ENCODE measurements at regions of chr2 and their contacts with region 1.

Region 1: GRCh38 chr2:225932811-225933413 is 533.4 kb downstream of the NYAP2 start:
- DNase-seq: no peak
- H3K4me3 ChIP-seq: no peak overlapping the region
- H3K4me3 Mint-ChIP-seq: no peak overlapping the region
- H3K27ac Mint-ChIP-seq: no peak overlapping the region
- H3K4me1 ChIP-seq: no peaks in the 10 kb centered on the region
- H3K4me1 Mint-ChIP-seq: no peaks in the 10 kb centered on the region
- H3K27me3 ChIP-seq: no peaks in the 10 kb centered on the region
- H3K27me3 Mint-ChIP-seq: no peaks in the 10 kb centered on the region
- CTCF ChIP-seq: no peak

Region 2: DNA sequence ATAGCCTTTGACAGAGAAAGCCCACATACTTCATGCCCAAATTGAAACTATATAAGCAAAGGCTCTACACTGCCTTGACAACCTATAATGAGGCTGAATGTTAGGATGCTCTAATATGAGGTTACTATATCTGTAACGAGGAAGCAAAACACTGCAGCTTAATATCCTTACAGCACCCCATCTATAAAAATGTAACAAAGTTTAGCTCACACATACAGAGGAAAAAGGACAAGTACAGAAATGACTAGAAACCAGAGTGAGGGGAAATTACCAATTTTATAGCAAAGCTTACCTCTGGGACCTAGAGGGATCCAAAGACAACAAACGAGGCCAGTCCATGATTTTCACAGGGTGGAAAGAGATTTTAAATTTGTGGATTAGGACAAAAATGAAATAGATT is 1092.6 kb after region 1 on chr2:
- CTCF ChIA-PET with region 1: no interaction called
- POLR2A ChIA-PET with region 1: no interaction called
- intact Hi-C with region 1: loop called (anchors 5 kb)
- DNase-seq: no peak
- H3K4me3 ChIP-seq: no peak overlapping the region
- H3K4me3 Mint-ChIP-seq: no peak overlapping the region
- H3K27ac Mint-ChIP-seq: no peak overlapping the region
- H3K4me1 ChIP-seq: no peaks in the 10 kb centered on the region
- H3K4me1 Mint-ChIP-seq: no peaks in the 10 kb centered on the region
- H3K27me3 ChIP-seq: no peaks in the 10 kb centered on the region
- H3K27me3 Mint-ChIP-seq: no peaks in the 10 kb centered on the region
- CTCF ChIP-seq: no peak